Endothelial cell of umbilical vein (primary cell): ENCODE measurements at regions of chr11 and their contacts with region 1.

Region 1: GRCh38 chr11:72141066-72141465 is 5.5 kb downstream of the FOLR3 start:
- DNase-seq: no peak
- H3K4me3 ChIP-seq: no peak overlapping the region
- H3K27ac ChIP-seq: no peak overlapping the region
- H3K4me1 ChIP-seq: no peaks in the 10 kb centered on the region
- H3K27me3 ChIP-seq: peaks cover 7 to 10% of the 10 kb centered on the region in 2 experiments
- CTCF ChIP-seq: no peak
- POLR2A ChIP-seq: no peak

Region 2: GRCh38 chr11:71977743-71978418 is 163.2 kb before region 1 on chr11:
- CTCF ChIA-PET with region 1: interaction called, 19 read pairs
- POLR2A ChIA-PET with region 1: no interaction called
- dilution Hi-C with region 1: no loop called
- intact Hi-C with region 1: loop called (anchors 1 kb)
- DNase-seq: peak; percentile 67
- H3K4me3 ChIP-seq: no peak overlapping the region
- H3K27ac ChIP-seq: no peak overlapping the region
- H3K4me1 ChIP-seq: no peaks in the 10 kb centered on the region
- H3K27me3 ChIP-seq: no peaks in the 10 kb centered on the region
- CTCF ChIP-seq: peak; percentile 54 to 57
- POLR2A ChIP-seq: no peak

Region 3: DNA sequence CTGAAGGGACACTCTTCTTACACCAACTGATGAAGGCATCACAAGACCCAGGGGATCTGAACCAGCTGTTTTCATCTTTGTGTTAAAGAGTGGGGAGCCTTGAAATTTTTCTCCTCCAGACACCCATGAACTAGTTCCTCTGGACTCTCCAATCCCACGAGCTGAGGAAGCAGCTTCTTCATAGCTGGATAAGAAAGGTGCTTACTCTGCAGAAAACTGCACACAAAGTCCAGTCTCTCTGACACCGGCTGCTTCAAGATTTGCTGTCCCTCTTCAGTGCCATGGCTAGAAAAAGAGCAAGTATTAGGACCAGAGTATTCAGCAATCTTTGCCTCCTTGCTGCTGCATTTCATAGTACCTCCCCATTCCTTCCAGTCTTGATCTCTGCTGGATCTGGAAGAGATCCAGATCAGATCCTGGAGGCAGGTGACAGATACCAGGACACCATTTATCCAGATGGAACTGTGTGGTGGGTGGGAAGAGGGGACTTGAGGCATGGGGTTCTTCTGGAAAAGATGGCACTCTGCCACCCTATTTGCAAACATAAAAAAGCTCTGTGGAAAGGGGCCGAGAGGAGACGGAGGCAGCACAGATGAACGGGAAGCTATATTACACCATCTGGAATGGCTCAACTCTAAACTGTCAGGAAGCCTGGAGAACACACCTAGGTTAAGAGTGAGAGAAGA is 116.9 kb before region 1 on chr11:
- CTCF ChIA-PET with region 1: interaction called, 190 read pairs
- POLR2A ChIA-PET with region 1: no interaction called
- dilution Hi-C with region 1: no loop called
- intact Hi-C with region 1: loop called (anchors 1 kb)
- DNase-seq: no peak
- H3K4me3 ChIP-seq: no peak overlapping the region
- H3K27ac ChIP-seq: no peak overlapping the region
- H3K4me1 ChIP-seq: peaks cover 6% of the 10 kb centered on the region
- H3K27me3 ChIP-seq: no peaks in the 10 kb centered on the region
- CTCF ChIP-seq: no peak
- POLR2A ChIP-seq: no peak

Region 4: DNA sequence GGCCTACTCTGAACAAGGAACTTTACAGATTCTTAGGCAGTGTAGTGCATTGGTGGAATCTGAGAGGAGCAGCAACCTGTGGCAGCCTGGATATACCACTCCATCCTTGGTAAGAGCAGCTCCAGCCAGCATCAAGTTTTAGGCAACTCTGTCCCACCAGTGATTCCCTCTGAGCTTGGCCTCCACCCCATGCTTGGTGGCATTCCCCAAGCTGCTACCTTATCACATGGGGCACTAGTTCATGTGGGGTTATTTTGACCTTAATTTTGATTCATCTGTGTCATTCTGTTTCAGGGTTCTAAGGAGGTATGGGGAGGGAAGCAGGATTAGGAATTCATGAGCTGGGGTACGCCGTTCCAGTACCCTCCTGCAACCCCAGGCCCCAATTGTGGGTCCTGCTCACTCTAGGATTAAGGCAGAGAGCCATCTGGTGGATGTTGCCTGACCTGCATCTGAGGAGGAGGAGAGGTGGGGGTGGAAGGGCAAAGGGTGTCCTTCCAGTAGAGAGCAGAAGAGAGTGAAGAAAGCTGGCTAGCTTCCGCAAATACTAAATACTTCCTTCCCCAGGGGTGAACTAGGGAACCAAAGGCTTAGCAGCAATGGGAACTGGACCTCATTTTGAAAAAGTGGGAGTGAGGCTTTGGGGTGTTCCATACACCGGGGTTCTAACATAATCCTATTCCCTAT is 49.9 kb before region 1 on chr11:
- CTCF ChIA-PET with region 1: interaction called, 16 read pairs
- POLR2A ChIA-PET with region 1: no interaction called
- dilution Hi-C with region 1: no loop called
- intact Hi-C with region 1: no loop called
- DNase-seq: peak; percentile 73
- H3K4me3 ChIP-seq: no peak overlapping the region
- H3K27ac ChIP-seq: no peak overlapping the region
- H3K4me1 ChIP-seq: peaks cover 3% of the 10 kb centered on the region
- H3K27me3 ChIP-seq: no peaks in the 10 kb centered on the region
- CTCF ChIP-seq: peak; percentile 84 to 87
- POLR2A ChIP-seq: no peak

Region 5: DNA sequence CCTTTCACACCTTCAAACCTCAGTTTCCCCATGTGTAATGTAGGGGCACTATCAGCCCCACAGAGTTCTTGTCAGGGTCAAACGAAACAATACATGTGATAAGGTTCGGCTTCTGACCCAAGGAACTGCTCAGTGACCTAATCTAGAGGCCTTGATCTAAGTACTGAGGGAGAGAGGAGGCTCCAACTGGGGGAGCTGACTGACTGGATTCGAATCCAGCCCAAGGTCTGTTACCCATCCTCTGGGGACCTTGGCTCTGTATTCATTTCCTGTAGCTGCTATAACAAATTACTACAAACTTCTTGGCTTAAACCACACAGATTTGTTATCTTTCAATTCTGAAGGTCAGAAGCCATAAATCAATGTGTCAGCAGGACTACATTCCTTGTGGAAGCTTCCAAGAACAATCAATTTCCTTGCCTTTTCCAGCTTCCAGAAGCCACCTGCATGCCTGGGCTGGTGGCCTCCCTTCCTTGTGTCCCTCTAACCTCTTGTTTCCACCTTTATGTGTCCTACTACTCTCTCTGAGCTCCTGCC is 17.9 kb before region 1 on chr11:
- CTCF ChIA-PET with region 1: interaction called, 25 read pairs
- POLR2A ChIA-PET with region 1: no interaction called
- dilution Hi-C with region 1: no loop called
- intact Hi-C with region 1: no loop called
- DNase-seq: no peak
- H3K4me3 ChIP-seq: no peak overlapping the region
- H3K27ac ChIP-seq: no peak overlapping the region
- H3K4me1 ChIP-seq: no peaks in the 10 kb centered on the region
- H3K27me3 ChIP-seq: peaks cover 0 to 4% of the 10 kb centered on the region in 2 experiments
- CTCF ChIP-seq: no peak
- POLR2A ChIP-seq: no peak

Region 6: GRCh38 chr11:72179804-72180396 is 38.8 kb after region 1 on chr11:
- CTCF ChIA-PET with region 1: interaction called, 17 read pairs
- POLR2A ChIA-PET with region 1: no interaction called
- dilution Hi-C with region 1: no loop called
- intact Hi-C with region 1: loop called (anchors 1 kb)
- DNase-seq: no peak
- H3K4me3 ChIP-seq: no peak overlapping the region
- H3K27ac ChIP-seq: no peak overlapping the region
- H3K4me1 ChIP-seq: no peaks in the 10 kb centered on the region
- H3K27me3 ChIP-seq: peaks cover 11% of the 10 kb centered on the region in 2 experiments
- CTCF ChIP-seq: no peak
- POLR2A ChIP-seq: no peak

Region 7: GRCh38 chr11:72446902-72447769 is 306.1 kb after region 1 on chr11:
- CTCF ChIA-PET with region 1: interaction called, 3 read pairs
- POLR2A ChIA-PET with region 1: no interaction called
- dilution Hi-C with region 1: no loop called
- intact Hi-C with region 1: loop called (anchors 5 kb)
- DNase-seq: peak; percentile 70
- H3K4me3 ChIP-seq: no peak overlapping the region
- H3K27ac ChIP-seq: no peak overlapping the region
- H3K4me1 ChIP-seq: no peaks in the 10 kb centered on the region
- H3K27me3 ChIP-seq: peaks cover 7 to 9% of the 10 kb centered on the region in 2 experiments
- CTCF ChIP-seq: peak; percentile 38 to 58
- POLR2A ChIP-seq: no peak